GM12878 (cell line): ENCODE measurements at regions of chr4 and their contacts with region 1.

Region 1: GRCh38 chr4:6873792-6874461 is 35.7 kb upstream of the TBC1D14 start:
- DNase-seq: no peak
- ATAC-seq: peak; percentile 96
- H3K4me3 ChIP-seq: no peak overlapping the region
- H3K27ac ChIP-seq: no peak overlapping the region
- H3K4me1 ChIP-seq: no peaks in the 10 kb centered on the region
- H3K27me3 ChIP-seq: no peaks in the 10 kb centered on the region
- CTCF ChIP-seq: peak; percentile 92 to 95 (median 95)
- EP300 ChIP-seq: no peak
- POLR2A ChIP-seq: no peak
- RAD21 ChIP-seq: peak; percentile 96

Region 2: GRCh38 chr4:6574747-6575502 is 299.0 kb before region 1 on chr4 and contains the start of gene MAN2B2:
- CTCF ChIA-PET with region 1: interaction called, 10 read pairs
- POLR2A ChIA-PET with region 1: interaction called, 3 read pairs
- RAD21 ChIA-PET with region 1: no interaction called
- SMC1A ChIA-PET with region 1: no interaction called
- in situ Hi-C with region 1: no loop called
- intact Hi-C with region 1: no loop called
- DNase-seq: peak; percentile 3
- ATAC-seq: peak; percentile 99
- H3K4me3 ChIP-seq: peak within 1 kb of the TSS; percentile 91
- H3K27ac ChIP-seq: peak within 1 kb of the TSS; percentile 80
- H3K4me1 ChIP-seq: peaks cover 12% of the 10 kb centered on the region
- H3K27me3 ChIP-seq: no peaks in the 10 kb centered on the region; a peak in 2 of 4 replicates
- CTCF ChIP-seq: no peak; a peak in 1 of 6 replicates
- EP300 ChIP-seq: no peak
- POLR2A ChIP-seq: peak; percentile 97
- RAD21 ChIP-seq: no peak
- polyA plus RNA-seq, gene MAN2B2: 0.47 to 1.2 TPM

Region 3: DNA sequence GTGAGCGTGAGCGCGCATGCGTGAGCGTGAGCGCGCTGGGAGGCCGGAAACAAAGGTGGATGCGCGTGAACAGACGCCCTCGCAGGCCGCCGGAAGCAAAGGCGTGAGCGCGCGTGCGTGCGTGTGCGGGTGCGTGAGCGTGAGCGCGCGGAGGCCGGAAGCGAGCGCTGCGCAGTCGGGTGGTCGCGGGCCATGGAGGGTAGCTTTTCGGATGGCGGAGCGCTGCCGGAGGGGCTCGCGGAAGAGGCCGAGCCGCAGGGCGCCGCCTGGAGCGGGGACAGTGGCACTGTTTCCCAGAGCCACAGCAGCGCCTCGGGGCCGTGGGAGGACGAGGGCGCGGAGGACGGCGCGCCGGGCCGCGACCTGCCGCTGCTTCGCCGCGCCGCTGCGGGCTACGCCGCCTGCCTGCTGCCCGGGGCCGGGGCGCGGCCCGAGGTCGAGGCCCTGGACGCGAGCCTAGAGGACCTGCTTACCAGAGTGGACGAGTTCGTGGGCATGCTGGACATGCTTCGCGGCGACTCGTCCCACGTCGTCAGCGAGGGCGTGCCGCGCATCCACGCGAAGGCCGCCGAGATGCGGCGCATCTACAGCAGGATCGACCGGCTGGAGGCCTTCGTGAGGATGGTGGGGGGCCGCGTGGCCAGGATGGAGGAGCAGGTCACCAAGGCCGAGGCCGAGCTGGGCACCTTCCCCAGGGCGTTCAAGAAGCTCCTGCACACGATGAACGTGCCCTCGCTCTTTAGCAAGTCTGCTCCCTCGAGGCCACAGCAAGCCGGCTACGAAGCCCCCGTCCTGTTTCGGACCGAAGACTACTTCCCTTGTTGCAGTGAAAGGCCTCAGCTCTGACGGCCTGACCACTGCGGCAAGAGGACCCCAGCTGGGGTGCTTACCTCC is 157.7 kb before region 1 on chr4 and contains the start of gene BLOC1S4:
- CTCF ChIA-PET with region 1: interaction called, 277 read pairs
- POLR2A ChIA-PET with region 1: interaction called, 14 read pairs
- RAD21 ChIA-PET with region 1: interaction called, 155 read pairs
- SMC1A ChIA-PET with region 1: interaction called, 153 read pairs
- in situ Hi-C with region 1: loop called (anchors 5 kb)
- intact Hi-C with region 1: loop called (anchors 1 kb)
- DNase-seq: peak; percentile 86
- ATAC-seq: peak; percentile 81
- H3K4me3 ChIP-seq: peak within 1 kb of the TSS; percentile 92
- H3K27ac ChIP-seq: peak within 1 kb of the TSS; percentile 81
- H3K4me1 ChIP-seq: peaks cover 7% of the 10 kb centered on the region
- H3K27me3 ChIP-seq: no peaks in the 10 kb centered on the region
- CTCF ChIP-seq: no peak
- EP300 ChIP-seq: no peak
- POLR2A ChIP-seq: peak; percentile 97
- RAD21 ChIP-seq: no peak
- polyA plus RNA-seq, gene BLOC1S4: 2.7 to 6.3 TPM

Region 4: GRCh38 chr4:6746631-6747293 is 127.2 kb before region 1 on chr4:
- CTCF ChIA-PET with region 1: interaction called, 13 read pairs
- POLR2A ChIA-PET with region 1: no interaction called
- RAD21 ChIA-PET with region 1: interaction called, 8 read pairs
- SMC1A ChIA-PET with region 1: no interaction called
- in situ Hi-C with region 1: no loop called
- intact Hi-C with region 1: no loop called
- DNase-seq: no peak
- ATAC-seq: no peak; the same call in 1 of the 3 replicates
- H3K4me3 ChIP-seq: no peak overlapping the region
- H3K27ac ChIP-seq: no peak overlapping the region
- H3K4me1 ChIP-seq: peaks cover 10% of the 10 kb centered on the region
- H3K27me3 ChIP-seq: no peaks in the 10 kb centered on the region
- CTCF ChIP-seq: no peak
- EP300 ChIP-seq: no peak
- POLR2A ChIP-seq: no peak
- RAD21 ChIP-seq: no peak

Region 5: DNA sequence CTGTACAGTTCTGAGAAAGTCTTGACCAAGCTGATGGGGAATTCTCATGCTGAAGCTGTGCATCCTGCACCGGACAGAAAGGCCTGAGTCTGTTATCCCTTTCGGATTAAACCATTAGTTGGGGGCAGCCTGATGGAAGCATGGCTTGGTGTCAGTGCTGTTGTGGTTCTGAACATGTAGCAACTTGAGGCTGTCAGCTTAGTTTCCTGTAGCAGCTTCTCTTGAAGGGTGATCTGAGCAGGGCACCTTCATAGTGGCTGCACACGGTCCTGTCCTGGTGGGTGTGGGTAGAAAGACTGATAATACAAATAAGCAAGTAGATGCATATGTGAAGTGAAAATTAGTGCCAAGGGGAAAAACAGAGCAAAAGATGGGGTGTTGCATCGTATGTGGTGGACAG is 79.7 kb before region 1 on chr4:
- CTCF ChIA-PET with region 1: interaction called, 13 read pairs
- POLR2A ChIA-PET with region 1: no interaction called
- RAD21 ChIA-PET with region 1: interaction called, 8 read pairs
- SMC1A ChIA-PET with region 1: interaction called, 5 read pairs
- in situ Hi-C with region 1: no loop called
- intact Hi-C with region 1: no loop called
- DNase-seq: no peak
- ATAC-seq: peak; percentile 22; the same call in 2 of the 3 replicates
- H3K4me3 ChIP-seq: no peak overlapping the region
- H3K27ac ChIP-seq: no peak overlapping the region
- H3K4me1 ChIP-seq: peaks cover 4% of the 10 kb centered on the region; the same call in 1 of the 2 replicates
- H3K27me3 ChIP-seq: no peaks in the 10 kb centered on the region
- CTCF ChIP-seq: no peak
- EP300 ChIP-seq: no peak
- POLR2A ChIP-seq: no peak
- RAD21 ChIP-seq: no peak

Region 6: DNA sequence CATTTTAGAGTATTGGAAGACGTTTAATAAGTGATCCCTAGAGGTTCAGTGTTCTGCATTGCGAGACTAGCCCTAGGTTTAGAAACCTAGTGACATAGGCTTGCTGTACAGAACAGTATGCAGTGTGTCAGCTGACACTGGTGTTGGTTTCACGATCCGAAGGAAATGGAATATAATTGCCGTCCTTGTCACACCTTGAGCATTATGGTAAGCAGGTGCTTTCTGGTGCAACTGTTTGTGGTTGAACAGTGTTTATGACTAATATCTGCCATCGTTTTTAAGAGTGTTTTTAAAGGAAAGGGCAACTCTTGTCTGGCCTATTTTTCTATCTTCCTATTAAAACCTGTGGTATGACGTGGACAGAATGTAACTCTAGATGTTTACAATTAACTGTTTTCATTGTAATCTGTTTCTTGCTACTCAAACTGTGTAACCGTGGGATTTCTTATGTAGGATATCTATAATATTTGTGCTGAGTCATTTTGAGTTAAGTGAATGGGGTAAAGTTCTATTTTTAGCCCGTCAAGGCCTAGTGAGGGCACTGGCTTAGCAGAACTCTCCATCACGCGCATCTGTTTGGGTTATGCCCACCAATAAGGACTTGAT is 18.1 kb before region 1 on chr4:
- CTCF ChIA-PET with region 1: interaction called, 28 read pairs
- POLR2A ChIA-PET with region 1: interaction called, 3 read pairs
- RAD21 ChIA-PET with region 1: interaction called, 28 read pairs
- SMC1A ChIA-PET with region 1: interaction called, 41 read pairs
- in situ Hi-C with region 1: no loop called
- intact Hi-C with region 1: no loop called
- DNase-seq: peak; percentile 94
- ATAC-seq: peak; percentile 94
- H3K4me3 ChIP-seq: no peak overlapping the region
- H3K27ac ChIP-seq: peak overlapping the region; percentile 58
- H3K4me1 ChIP-seq: peaks cover 18% of the 10 kb centered on the region
- H3K27me3 ChIP-seq: no peaks in the 10 kb centered on the region
- CTCF ChIP-seq: no peak
- EP300 ChIP-seq: peak; percentile 97 to 98
- POLR2A ChIP-seq: peak; percentile 24; the same call in 1 of the 2 replicates
- RAD21 ChIP-seq: no peak

Region 7: GRCh38 chr4:6898763-6899162 is 24.8 kb after region 1 on chr4:
- CTCF ChIA-PET with region 1: interaction called, 13 read pairs
- POLR2A ChIA-PET with region 1: no interaction called
- RAD21 ChIA-PET with region 1: no interaction called
- SMC1A ChIA-PET with region 1: interaction called, 11 read pairs
- in situ Hi-C with region 1: no loop called
- intact Hi-C with region 1: no loop called
- DNase-seq: no peak
- ATAC-seq: peak; percentile 41
- H3K4me3 ChIP-seq: no peak overlapping the region
- H3K27ac ChIP-seq: no peak overlapping the region
- H3K4me1 ChIP-seq: peaks cover 9% of the 10 kb centered on the region
- H3K27me3 ChIP-seq: no peaks in the 10 kb centered on the region
- CTCF ChIP-seq: no peak
- EP300 ChIP-seq: no peak
- POLR2A ChIP-seq: no peak
- RAD21 ChIP-seq: no peak